Thyroid gland (tissue), 4 donors: ENCODE measurements at regions of chr2 and their contacts with region 1.

Region 1: DNA sequence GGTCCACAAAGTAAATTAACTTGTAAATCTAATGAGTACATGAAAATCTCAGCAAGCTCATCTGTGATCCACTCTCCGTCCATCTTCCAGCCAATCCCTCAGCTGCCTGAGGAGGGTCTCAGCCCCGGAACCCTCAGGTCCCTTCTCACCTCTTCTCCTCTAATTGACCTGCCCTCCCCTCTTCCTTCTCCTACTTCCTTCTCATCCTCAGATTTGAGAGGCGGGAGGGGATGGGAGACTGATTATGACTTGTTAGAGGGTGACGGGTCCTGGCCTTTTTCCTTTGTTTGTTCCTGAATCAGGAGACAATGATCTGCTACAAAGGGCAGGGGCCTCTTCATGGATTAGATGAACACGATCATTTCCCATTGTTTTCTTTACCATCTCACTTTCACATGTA is 80.1 kb downstream of the CYBRD1 start:
- DNase-seq: no peak
- H3K4me3 ChIP-seq: no peak overlapping the region
- H3K27ac ChIP-seq: no peak overlapping the region
- H3K4me1 ChIP-seq: no peaks in the 10 kb centered on the region
- H3K27me3 ChIP-seq: no peaks in the 10 kb centered on the region
- CTCF ChIP-seq: no peak
- POLR2A ChIP-seq: no peak

Region 2: GRCh38 chr2:171652416-171652785 is 50.0 kb after region 1 on chr2:
- intact Hi-C with region 1: no loop called
- DNase-seq: no peak
- H3K4me3 ChIP-seq: no peak overlapping the region
- H3K27ac ChIP-seq: no peak overlapping the region
- H3K4me1 ChIP-seq: no peaks in the 10 kb centered on the region
- H3K27me3 ChIP-seq: no peaks in the 10 kb centered on the region
- CTCF ChIP-seq: no peak
- POLR2A ChIP-seq: no peak

Region 3: GRCh38 chr2:171741189-171741588 is 138.8 kb after region 1 on chr2:
- intact Hi-C with region 1: no loop called
- DNase-seq: no peak
- H3K4me3 ChIP-seq: no peak overlapping the region
- H3K27ac ChIP-seq: no peak overlapping the region
- H3K4me1 ChIP-seq: peaks cover 0 to 2% of the 10 kb centered on the region in 2 donors
- H3K27me3 ChIP-seq: no peaks in the 10 kb centered on the region
- CTCF ChIP-seq: no peak
- POLR2A ChIP-seq: no peak

Region 4: GRCh38 chr2:172113617-172114016 is 511.3 kb after region 1 on chr2:
- intact Hi-C with region 1: loop called (anchors 10 kb)
- DNase-seq: no peak
- H3K4me3 ChIP-seq: no peak overlapping the region
- H3K27ac ChIP-seq: no peak overlapping the region
- H3K4me1 ChIP-seq: no peaks in the 10 kb centered on the region
- H3K27me3 ChIP-seq: peaks cover 4% of the 10 kb centered on the region
- CTCF ChIP-seq: peak in 2 of 6 experiments; percentile 10 to 36
- POLR2A ChIP-seq: no peak